WTC11 (cell line): ENCODE measurements at regions of chr11 and their contacts with region 1.

Region 1: DNA sequence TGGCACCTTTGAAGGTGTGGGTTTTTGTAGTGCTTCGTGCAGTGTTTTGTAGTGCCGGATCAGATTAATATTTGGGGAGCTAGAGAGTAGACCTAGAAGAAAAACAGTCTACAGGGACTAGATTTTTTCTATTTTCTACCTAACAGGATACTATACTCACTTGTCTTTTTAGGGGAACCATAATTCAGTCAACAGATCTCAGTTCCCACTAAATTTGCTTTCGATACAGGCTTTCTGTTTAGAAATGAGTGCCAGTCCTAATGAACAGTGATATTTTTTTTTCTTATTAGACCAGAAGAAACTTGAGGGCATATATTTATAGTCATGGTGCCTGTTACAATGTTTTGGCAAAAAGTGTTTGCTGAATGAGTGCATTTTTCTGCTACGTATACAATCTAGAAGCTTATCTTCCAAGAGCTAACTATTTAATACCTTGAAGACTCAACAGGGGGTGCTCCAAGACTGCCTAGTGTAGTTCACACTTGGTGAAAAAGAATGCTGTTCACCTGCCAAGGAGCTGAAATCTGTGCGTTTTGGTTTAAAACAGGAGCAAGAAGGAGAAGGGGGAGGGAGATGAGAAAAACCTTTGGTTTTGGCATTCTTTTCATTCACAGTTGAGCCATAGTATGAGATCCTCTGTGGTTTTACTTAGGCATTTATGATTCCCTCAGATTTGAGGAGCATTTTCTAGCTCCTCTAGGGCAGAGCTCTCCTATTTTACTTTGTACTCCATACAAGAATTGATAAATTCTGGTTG is 44.9 kb upstream of the VSTM5 start:
- DNase-seq: peak; percentile 20
- ATAC-seq: peak; percentile 96
- H3K4me3 Mint-ChIP-seq: no peak overlapping the region
- H3K27ac Mint-ChIP-seq: no peak overlapping the region
- H3K4me1 Mint-ChIP-seq: no peaks in the 10 kb centered on the region
- H3K27me3 Mint-ChIP-seq: peaks cover 10% of the 10 kb centered on the region
- CTCF ChIP-seq: no peak; the same call in 1 of the 2 replicates

Region 2: DNA sequence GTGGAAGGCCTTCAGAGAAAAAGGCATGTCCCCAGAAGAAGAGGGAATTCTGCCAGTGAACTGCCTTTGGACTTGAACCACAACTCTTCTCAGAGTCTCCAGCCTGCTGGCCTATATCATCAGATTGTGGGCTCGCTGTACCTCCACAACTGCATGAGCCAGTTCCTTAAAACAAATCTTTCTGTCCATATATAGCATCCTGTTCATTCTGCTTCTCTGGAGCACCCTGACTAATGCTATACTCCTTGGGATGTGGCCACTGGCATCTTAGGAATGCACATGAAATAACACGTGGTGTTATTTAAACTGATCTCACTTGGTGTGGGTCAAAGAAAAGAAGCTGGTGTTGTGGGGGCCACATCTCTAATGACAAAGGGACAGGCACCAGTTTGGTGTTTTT is 13.4 kb after region 1 on chr11:
- CTCF ChIA-PET with region 1: interaction called, 27 read pairs
- POLR2A ChIA-PET with region 1: no interaction called
- DNase-seq: no peak
- ATAC-seq: peak; percentile 53
- H3K4me3 Mint-ChIP-seq: no peak overlapping the region
- H3K27ac Mint-ChIP-seq: no peak overlapping the region
- H3K4me1 Mint-ChIP-seq: peaks cover 11% of the 10 kb centered on the region
- H3K27me3 Mint-ChIP-seq: no peaks in the 10 kb centered on the region
- CTCF ChIP-seq: no peak

Region 3: DNA sequence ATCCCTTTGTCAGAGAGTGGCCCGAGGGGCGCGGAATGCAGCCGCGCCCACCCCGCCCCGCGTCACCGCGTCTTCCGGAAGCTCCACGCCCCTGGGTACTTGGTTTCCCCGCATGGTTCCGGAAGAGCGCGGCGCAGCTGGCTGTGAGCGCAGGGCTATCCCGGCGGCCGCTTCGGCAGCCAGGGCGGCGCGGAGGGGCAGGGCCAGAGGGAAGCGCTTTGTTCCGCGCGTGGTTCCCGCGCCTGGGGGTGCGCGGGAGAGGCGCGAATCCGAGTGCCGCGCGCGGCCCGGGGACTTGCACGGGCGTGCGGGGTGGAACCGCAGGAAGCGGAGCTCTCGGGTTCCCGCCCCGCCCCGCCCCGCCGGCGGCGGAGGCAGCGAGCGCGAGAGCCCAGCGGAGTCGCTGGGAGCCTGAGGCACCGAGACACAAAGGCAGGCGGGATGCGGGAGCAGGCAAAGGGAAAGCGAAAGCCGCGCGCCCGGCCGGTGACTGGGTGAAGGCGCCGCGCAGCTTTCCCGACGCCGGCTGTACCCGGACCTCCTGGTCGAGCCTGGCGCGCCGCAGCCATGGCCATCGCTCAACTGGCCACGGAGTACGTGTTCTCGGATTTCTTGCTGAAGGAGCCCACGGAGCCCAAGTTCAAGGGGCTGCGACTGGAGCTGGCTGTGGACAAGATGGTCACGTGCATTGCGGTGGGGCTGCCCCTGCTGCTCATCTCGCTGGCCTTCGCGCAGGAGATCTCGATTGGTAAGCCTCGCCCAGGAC is 233.6 kb after region 1 on chr11 and contains the start of gene PANX1:
- CTCF ChIA-PET with region 1: interaction called, 13 read pairs
- POLR2A ChIA-PET with region 1: no interaction called
- DNase-seq: peak; percentile 75
- ATAC-seq: peak; percentile 78
- H3K4me3 Mint-ChIP-seq: no peak within 1 kb of the TSS
- H3K27ac Mint-ChIP-seq: peak within 1 kb of the TSS; percentile 90
- H3K4me1 Mint-ChIP-seq: peaks cover 32% of the 10 kb centered on the region
- H3K27me3 Mint-ChIP-seq: no peaks in the 10 kb centered on the region
- CTCF ChIP-seq: no peak
- total RNA-seq, gene PANX1: 21.9 to 22.9 TPM (median 22.2 TPM) in 3 replicates

Region 4: DNA sequence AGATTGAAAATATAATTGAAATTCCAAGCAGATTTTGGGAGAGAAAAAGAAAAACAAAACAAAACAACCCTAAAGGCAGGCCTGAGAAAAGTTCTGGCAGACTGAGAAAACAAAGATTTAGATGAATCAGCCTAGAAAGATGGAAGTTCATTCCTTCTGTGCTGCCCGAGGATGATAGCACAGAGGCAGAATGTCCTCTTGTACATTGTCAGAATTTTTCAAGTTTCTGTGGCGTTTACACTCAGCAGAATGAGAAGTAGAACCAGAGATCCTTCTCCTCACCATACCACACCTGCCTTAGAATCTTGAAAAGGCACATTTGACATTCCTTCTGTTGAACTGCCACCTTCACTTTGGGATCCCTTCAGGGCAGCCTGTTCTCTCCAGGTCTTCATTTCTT is 346.6 kb after region 1 on chr11:
- CTCF ChIA-PET with region 1: interaction called, 13 read pairs
- POLR2A ChIA-PET with region 1: no interaction called
- DNase-seq: no peak
- ATAC-seq: no peak
- H3K4me3 Mint-ChIP-seq: no peak overlapping the region
- H3K27ac Mint-ChIP-seq: no peak overlapping the region
- H3K4me1 Mint-ChIP-seq: no peaks in the 10 kb centered on the region
- H3K27me3 Mint-ChIP-seq: peaks cover 7% of the 10 kb centered on the region; the same call in 1 of the 2 replicates
- CTCF ChIP-seq: no peak

Region 5: DNA sequence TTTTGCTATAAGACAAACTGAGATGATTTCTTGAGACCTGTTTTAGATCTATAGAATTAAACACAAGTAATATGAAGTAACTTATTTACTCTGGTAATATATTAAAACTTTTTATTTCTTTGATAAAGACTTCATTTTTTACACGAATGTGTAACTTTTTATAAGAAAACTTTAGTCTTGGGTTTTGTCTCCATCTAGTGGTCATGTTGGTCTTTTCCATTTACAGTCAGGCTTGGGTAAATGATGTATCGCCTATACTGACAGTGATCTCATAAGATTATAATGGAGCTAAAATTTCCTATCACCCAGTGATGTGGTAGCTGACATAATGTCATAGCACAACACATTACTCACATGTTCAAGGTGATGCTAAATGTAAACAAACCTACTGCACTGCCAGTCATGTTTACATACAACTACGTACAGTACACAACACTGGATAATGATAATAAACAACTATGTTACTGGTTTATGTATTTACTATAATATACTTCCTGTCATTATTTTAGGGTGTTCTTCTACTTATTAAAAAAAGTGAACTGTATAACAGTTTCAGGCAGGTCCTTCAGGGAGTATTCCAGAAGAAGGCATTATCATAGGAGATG is 609.5 kb after region 1 on chr11:
- CTCF ChIA-PET with region 1: interaction called, 24 read pairs
- POLR2A ChIA-PET with region 1: no interaction called
- DNase-seq: no peak
- ATAC-seq: no peak
- H3K4me3 Mint-ChIP-seq: no peak overlapping the region
- H3K27ac Mint-ChIP-seq: no peak overlapping the region
- H3K4me1 Mint-ChIP-seq: no peaks in the 10 kb centered on the region
- H3K27me3 Mint-ChIP-seq: peaks cover 6% of the 10 kb centered on the region; the same call in 1 of the 2 replicates
- CTCF ChIP-seq: peak; percentile 61